ENCODE measurements at regions of chr11 and their contacts with region 1.

Region 1: GRCh38 chr11:44597358-44598012 is 32.0 kb downstream of the CD82 start:
- DNase-seq: no peak
- H3K4me3 ChIP-seq: no peak overlapping the region
- H3K27ac ChIP-seq: peak overlapping the region; percentile 38 to 53
- H3K4me1 ChIP-seq: peaks cover 37% of the 10 kb centered on the region
- H3K27me3 ChIP-seq: no peaks in the 10 kb centered on the region
- CTCF ChIP-seq: no peak
- EP300 ChIP-seq: no peak
- POLR2A ChIP-seq: no peak

Region 2: DNA sequence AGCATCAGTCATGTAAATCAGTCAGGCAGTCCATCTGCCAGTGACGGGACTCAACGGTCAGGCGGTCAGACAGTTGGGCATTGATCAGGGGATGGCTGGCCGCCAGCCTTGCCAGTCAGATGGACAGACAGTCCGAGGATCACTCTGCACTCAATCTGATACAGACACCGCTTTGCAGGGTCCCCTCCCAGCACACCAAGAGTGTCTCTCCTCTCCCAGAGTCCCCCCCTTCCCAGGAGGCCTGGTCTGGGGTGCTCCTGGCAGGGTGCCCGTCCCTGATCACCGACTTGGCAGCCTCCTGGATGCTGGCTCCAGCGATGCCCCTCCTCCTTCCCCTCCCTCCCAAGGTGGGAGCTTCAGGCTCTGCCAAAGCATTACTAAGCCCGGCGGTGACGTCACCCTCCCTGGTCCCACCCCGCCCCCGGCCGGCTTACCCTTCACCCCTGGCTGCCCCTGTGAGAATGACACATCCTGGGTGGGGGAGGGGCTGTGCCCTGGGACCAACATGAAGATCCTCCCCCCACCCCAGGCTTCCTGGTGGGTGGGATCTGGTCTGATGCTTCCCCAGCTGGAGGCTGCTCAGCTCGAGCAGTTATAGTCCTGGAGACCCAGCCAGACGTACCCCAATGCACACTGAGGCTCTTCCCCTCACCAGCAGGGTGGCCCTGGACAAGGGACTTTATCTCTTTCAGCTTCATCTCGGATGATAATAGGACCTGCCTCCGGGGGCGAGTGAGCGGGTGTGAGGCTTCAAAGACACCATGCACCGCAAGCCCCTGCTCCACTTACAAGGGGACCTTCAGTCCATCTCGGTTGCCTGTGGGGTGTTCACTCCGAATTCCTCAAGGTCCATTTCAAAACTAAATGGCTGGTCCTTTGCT is 37.2 kb after region 1 on chr11:
- intact Hi-C with region 1: loop called in 1 of 4 experiments (anchors 1 kb)
- DNase-seq: peak; percentile 72 to 91 (median 85)
- H3K4me3 ChIP-seq: no peak overlapping the region
- H3K27ac ChIP-seq: no peak overlapping the region
- H3K4me1 ChIP-seq: peaks cover 8% of the 10 kb centered on the region
- H3K27me3 ChIP-seq: no peaks in the 10 kb centered on the region
- CTCF ChIP-seq: no peak
- EP300 ChIP-seq: no peak
- POLR2A ChIP-seq: no peak

Region 3: GRCh38 chr11:44702889-44703288 is 105.4 kb after region 1 on chr11:
- intact Hi-C with region 1: no loop called
- DNase-seq: peak in 2 of 5 donors; percentile 23 to 34
- H3K4me3 ChIP-seq: no peak overlapping the region
- H3K27ac ChIP-seq: no peak overlapping the region
- H3K4me1 ChIP-seq: peaks cover 12% of the 10 kb centered on the region
- H3K27me3 ChIP-seq: no peaks in the 10 kb centered on the region
- CTCF ChIP-seq: no peak
- EP300 ChIP-seq: no peak
- POLR2A ChIP-seq: no peak

Region 4: GRCh38 chr11:45045683-45046471 is 448.4 kb after region 1 on chr11:
- intact Hi-C with region 1: no loop called
- DNase-seq: peak in 1 of 5 donors; percentile 29
- H3K4me3 ChIP-seq: no peak overlapping the region
- H3K27ac ChIP-seq: no peak overlapping the region
- H3K4me1 ChIP-seq: no peaks in the 10 kb centered on the region
- H3K27me3 ChIP-seq: no peaks in the 10 kb centered on the region
- CTCF ChIP-seq: no peak
- EP300 ChIP-seq: no peak
- POLR2A ChIP-seq: no peak

Region 5: DNA sequence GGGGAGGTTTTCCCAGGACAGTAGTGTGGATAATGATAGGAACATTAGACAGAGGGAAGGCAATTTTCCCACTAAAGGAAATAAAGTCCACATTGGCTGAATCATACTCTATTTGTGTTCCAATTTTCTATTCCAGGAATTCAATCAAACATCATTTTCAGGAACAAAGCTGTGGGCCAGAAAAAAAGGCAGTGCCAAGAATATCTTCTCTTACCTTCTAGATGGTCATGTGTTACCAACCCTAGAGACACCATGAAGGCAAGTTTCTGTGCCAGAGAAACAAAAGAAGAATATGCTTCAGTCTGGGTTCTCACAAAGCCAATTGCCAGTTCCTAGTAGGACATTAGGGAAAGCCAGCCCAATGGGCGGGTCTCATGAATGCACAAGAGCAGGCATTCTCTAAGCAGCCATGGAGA is 1352.5 kb after region 1 on chr11:
- intact Hi-C with region 1: no loop called
- DNase-seq: no peak
- H3K4me3 ChIP-seq: no peak overlapping the region
- H3K27ac ChIP-seq: no peak overlapping the region
- H3K4me1 ChIP-seq: peaks cover 7% of the 10 kb centered on the region
- H3K27me3 ChIP-seq: no peaks in the 10 kb centered on the region
- CTCF ChIP-seq: no peak
- EP300 ChIP-seq: no peak
- POLR2A ChIP-seq: no peak

Measured in ovary (tissue), 10 donors.